ENCODE measurements at regions of chr5 and their contacts with region 1.

Region 1: DNA sequence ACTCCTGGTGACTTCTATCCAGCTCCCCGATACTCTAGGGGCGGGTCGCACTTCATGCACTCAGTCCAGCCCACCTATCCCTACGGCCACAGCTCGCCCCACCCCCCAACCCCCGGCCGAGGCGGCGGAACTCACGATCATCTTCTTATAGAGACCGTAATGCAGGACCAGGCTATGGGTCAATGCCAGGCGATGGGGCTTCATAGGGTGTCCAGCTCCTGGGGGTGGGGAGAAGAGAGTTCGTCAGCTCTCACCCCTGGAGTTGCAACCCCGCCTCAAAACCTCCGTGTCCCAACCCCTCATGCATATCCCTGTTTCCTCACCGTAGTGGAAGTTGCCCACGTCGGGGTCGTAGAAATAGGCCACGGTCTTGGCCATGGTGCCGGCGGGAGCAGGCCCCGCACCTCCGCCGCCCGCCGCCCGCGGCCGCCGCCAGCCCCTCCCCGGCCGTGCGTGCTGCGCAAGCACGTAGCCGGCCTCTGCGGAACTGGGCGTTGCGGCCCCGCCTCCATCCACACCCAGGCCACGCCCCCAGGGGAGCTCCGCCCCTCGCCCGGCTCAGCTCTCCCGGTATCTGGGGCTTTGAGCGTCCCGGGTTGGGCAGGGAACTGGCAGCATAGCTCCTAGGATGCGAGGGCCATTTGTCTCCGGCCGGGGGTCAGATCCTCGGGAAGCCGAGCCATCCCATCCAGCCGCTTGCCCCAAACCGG is at the starts of genes HDAC3 and RELL2:
- DNase-seq: peak; percentile 95
- H3K4me3 Mint-ChIP-seq: peak within 1 kb of the TSS; percentile 92
- H3K27ac Mint-ChIP-seq: peak within 1 kb of the TSS; percentile 47
- H3K4me1 Mint-ChIP-seq: peaks cover 42% of the 10 kb centered on the region
- H3K27me3 Mint-ChIP-seq: no peaks in the 10 kb centered on the region
- CTCF ChIP-seq: no peak
- total RNA-seq, gene HDAC3: 83.5 and 85.6 TPM in 2 replicates
- total RNA-seq, gene RELL2: 12.5 and 13.3 TPM in 2 replicates

Region 2: GRCh38 chr5:141590127-141590526 is 46.4 kb before region 1 on chr5:
- CTCF ChIA-PET with region 1: interaction called, 68 read pairs
- POLR2A ChIA-PET with region 1: interaction called, 55 read pairs
- intact Hi-C with region 1: no loop called
- DNase-seq: no peak
- H3K4me3 Mint-ChIP-seq: no peak overlapping the region
- H3K27ac Mint-ChIP-seq: no peak overlapping the region
- H3K4me1 Mint-ChIP-seq: peaks cover 15% of the 10 kb centered on the region
- H3K27me3 Mint-ChIP-seq: no peaks in the 10 kb centered on the region
- CTCF ChIP-seq: no peak

Region 3: DNA sequence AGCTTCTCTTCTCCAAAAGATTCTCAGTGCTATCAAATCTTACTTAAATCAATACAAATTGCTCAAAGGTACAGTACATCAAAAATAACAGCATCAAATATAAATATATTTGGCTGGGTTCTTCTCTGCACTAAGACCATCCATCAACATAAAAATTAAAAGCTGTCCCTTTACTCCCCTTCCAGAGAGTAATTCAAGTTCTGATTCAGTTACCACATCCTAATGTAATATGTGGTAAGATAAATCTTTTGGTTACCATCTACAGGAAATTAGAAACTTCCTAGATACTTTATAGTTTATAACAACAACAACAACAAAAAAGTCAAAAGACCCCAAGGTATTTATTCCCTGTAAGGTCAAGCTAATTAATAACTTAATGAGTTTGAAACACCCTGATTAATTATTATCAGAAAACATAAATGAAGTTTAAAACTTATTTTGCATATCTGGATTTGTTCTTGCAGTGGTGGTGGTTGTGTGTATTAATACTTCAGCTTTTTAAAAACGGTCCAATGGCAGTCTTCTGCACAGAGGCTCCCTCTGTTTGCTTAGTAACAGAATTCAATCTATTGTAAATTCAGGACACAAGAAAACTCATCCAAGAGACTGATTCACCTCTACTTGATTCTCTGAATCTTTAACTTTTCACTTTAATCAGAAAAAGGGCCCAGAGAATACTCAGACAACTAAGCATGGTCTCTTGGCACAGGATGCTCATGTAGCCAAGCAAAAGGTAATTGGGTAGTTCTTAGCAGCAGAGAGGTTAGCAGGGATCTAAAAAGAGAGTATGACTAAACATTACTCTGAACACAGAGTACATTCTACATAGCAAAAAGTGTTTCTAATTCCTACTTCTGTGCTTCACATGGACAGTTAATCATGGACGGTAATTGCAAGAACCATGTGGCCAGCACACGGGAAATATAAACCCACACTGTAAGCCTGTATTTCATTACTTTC is 37.9 kb before region 1 on chr5:
- CTCF ChIA-PET with region 1: interaction called, 68 read pairs
- POLR2A ChIA-PET with region 1: interaction called, 55 read pairs
- intact Hi-C with region 1: no loop called
- DNase-seq: no peak
- H3K4me3 Mint-ChIP-seq: no peak overlapping the region
- H3K27ac Mint-ChIP-seq: peak overlapping the region; percentile 6
- H3K4me1 Mint-ChIP-seq: peaks cover 20% of the 10 kb centered on the region
- H3K27me3 Mint-ChIP-seq: no peaks in the 10 kb centered on the region
- CTCF ChIP-seq: no peak

Region 4: GRCh38 chr5:141605523-141606277 is 30.9 kb before region 1 on chr5:
- CTCF ChIA-PET with region 1: interaction called, 5 read pairs
- POLR2A ChIA-PET with region 1: interaction called, 39 read pairs
- intact Hi-C with region 1: no loop called
- DNase-seq: peak; percentile 63
- H3K4me3 Mint-ChIP-seq: peak overlapping the region; percentile 17
- H3K27ac Mint-ChIP-seq: peak overlapping the region; percentile 98
- H3K4me1 Mint-ChIP-seq: peaks cover 44% of the 10 kb centered on the region
- H3K27me3 Mint-ChIP-seq: no peaks in the 10 kb centered on the region
- CTCF ChIP-seq: no peak

Region 5: DNA sequence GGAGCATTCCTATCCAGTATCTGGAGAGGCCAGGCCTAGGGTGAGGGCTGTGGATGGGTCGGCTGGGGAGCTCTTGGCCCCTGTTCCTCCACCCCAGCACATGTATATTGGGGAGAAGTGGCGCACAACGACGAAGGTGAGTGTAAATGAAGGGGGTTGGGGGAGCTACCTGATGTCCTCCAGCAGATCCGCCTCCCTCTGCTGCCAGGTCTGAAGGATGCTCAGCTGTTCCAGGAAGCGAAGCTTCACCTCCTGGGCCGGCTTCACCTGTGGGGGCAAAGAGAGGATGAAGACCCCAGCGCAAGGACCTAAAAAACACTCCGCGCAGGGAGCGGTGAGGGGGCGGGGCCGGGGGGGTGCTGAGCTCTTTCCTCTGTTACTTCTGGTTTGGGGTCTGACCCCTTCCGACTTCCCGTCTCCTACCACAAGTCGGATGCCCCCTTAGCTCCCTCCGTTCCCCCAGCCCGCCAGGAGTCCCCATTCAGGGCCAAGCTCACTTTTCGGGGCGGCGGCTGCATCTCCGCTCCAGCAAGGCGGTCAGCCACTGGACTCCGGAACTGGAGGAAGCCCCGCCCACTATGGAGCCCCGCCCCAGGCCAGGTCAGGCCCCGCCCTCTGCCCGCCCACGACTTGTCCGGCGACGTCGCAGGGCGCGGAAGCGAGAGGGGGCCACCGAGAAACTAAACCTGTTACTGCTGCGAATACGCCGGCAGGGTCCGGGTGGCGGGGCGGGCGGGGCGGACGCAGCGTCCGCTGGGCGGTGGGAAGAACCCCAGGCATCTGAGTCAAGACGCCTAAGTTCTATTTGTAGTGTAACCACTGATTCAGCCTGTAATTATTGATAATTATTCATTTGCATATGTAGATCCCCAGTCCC is 14.5 kb after region 1 on chr5 and contains the start of gene FCHSD1:
- CTCF ChIA-PET with region 1: interaction called, 18 read pairs
- POLR2A ChIA-PET with region 1: interaction called, 71 read pairs
- intact Hi-C with region 1: no loop called
- DNase-seq: peak; percentile 87
- H3K4me3 Mint-ChIP-seq: peak within 1 kb of the TSS; percentile 95
- H3K27ac Mint-ChIP-seq: peak within 1 kb of the TSS; percentile 74
- H3K4me1 Mint-ChIP-seq: peaks cover 35% of the 10 kb centered on the region
- H3K27me3 Mint-ChIP-seq: no peaks in the 10 kb centered on the region
- CTCF ChIP-seq: no peak
- total RNA-seq, gene FCHSD1: 21.2 and 22.1 TPM in 2 replicates

Region 6: DNA sequence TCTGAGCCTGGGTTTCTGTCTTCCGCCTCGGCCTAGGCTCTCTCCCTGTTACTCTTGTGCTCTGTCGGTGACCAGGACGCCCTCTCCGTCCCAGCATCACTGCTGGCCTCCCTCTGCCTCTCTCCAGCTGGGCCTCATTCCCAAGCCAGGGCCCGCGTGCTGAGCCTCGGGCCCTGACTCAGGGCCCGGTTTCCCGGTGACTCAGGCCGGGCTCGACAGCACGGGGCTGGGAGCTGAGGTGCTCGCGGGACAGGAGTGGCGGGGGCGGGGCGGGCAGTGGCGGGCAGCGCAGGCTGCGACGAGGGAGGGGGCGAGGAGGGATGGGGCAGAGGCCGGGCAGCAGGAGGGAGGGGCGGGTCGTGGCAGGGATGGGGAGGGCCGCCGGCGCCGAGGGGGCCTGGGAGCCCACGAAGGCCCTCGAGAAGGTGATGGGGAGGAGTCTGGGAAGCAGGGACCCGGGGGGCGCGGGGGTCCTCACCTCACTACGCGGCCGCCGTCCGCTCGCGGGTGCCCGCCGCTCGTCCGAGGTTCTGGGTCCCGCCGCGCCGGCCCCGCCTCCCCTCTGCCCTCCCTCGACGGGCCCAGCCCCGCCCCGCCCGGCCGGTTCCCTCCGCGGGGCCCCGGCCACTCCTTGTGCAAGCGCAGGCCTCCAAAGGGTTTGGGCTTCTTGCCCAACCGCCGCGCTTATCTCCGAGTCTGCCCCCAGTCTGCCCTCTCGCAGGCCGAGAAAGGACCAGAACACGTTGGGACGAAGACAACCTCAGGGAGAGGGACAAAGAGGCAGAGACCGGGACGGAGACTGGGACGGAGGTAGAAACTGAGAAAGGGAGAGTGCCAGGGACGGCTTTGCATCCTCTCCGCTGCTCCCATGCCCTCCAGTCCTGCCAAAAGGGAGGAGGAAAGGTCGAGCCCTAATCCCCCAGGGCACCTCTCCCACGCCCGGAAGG is 45.4 kb after region 1 on chr5 and contains the start of gene ARAP3:
- CTCF ChIA-PET with region 1: no interaction called
- POLR2A ChIA-PET with region 1: interaction called, 11 read pairs
- intact Hi-C with region 1: no loop called
- DNase-seq: peak; percentile 93
- H3K4me3 Mint-ChIP-seq: peak within 1 kb of the TSS; percentile 76
- H3K27ac Mint-ChIP-seq: peak within 1 kb of the TSS; percentile 93
- H3K4me1 Mint-ChIP-seq: peaks cover 14% of the 10 kb centered on the region
- H3K27me3 Mint-ChIP-seq: no peaks in the 10 kb centered on the region
- CTCF ChIP-seq: no peak
- total RNA-seq, gene ARAP3: 19.8 and 22.8 TPM in 2 replicates

Measured in MCF 10A (cell line).